ENCODE measurements at regions of chr14 and their contacts with region 1.

Region 1: DNA sequence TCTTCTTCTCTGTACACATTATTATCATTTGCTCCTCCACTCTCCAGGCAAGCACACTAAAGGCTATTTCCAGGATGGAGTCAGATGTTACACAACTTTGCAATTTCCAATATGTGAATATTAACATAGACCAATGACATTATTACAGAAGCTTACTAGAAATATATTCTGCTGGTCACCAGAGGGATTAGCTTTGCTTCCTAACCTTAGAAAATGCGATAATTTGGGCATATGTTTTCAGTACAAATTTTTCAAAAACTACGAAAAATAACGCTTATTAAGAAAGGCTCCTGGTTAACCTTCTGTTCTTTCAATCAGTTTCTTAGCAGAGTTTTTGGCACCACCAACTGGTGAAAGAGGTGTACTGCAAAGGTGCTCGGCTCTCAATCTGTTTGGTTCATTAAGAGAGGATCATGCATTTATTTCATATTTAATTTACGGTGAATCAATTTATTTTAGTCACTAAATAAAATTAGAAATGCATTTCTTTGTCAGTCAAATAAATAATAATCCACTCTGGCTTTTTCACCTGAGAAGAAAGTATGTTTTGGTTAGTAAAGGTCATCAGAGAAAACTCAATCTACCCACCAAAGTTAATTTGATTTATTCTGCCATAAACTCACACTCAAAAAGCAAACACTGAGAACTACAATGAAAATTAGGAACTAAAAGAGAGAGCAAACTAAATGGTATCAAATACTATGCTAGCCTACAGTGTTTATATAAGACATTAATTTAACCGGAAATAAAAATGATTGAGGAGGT is 39.2 kb downstream of the EFCAB11 start:
- DNase-seq: peak in 6 of 10 donors; percentile 35 to 80 (median 64)
- H3K4me3 ChIP-seq: peak overlapping the region in 8 of 59 donors; percentile 10 to 33 (median 17)
- H3K27ac ChIP-seq: peak overlapping the region in 13 of 59 donors; percentile 2 to 54 (median 24)
- H3K27me3 ChIP-seq: no peaks in the 10 kb centered on the region
- CTCF ChIP-seq: peak; percentile 94 to 99 (median 97)

Region 2: GRCh38 chr14:89027097-89027740 is 888.1 kb before region 1 on chr14:
- intact Hi-C with region 1: loop called in 1 of 2 experiments (anchors 5 kb)
- DNase-seq: peak in 5 of 10 donors; percentile 29 to 76 (median 52)
- H3K4me3 ChIP-seq: peak overlapping the region; percentile 40 to 85 (median 68)
- H3K27ac ChIP-seq: peak overlapping the region in 3 of 59 donors; percentile 5 to 46 (median 38)
- H3K27me3 ChIP-seq: peaks cover 0 to 2% (median 0%) of the 10 kb centered on the region in 45 donors
- CTCF ChIP-seq: peak; percentile 35 to 96 (median 74)

Region 3: GRCh38 chr14:89040460-89041259 is 874.6 kb before region 1 on chr14:
- intact Hi-C with region 1: loop called (anchors 2 to 5 kb)
- DNase-seq: peak; percentile 79 to 93 (median 88)
- H3K4me3 ChIP-seq: peak overlapping the region; percentile 33 to 80 (median 62)
- H3K27ac ChIP-seq: peak overlapping the region in 56 of 59 donors; percentile 1 to 91 (median 76)
- H3K27me3 ChIP-seq: no peaks in the 10 kb centered on the region
- CTCF ChIP-seq: peak; percentile 78 to 97 (median 93)

Region 4: DNA sequence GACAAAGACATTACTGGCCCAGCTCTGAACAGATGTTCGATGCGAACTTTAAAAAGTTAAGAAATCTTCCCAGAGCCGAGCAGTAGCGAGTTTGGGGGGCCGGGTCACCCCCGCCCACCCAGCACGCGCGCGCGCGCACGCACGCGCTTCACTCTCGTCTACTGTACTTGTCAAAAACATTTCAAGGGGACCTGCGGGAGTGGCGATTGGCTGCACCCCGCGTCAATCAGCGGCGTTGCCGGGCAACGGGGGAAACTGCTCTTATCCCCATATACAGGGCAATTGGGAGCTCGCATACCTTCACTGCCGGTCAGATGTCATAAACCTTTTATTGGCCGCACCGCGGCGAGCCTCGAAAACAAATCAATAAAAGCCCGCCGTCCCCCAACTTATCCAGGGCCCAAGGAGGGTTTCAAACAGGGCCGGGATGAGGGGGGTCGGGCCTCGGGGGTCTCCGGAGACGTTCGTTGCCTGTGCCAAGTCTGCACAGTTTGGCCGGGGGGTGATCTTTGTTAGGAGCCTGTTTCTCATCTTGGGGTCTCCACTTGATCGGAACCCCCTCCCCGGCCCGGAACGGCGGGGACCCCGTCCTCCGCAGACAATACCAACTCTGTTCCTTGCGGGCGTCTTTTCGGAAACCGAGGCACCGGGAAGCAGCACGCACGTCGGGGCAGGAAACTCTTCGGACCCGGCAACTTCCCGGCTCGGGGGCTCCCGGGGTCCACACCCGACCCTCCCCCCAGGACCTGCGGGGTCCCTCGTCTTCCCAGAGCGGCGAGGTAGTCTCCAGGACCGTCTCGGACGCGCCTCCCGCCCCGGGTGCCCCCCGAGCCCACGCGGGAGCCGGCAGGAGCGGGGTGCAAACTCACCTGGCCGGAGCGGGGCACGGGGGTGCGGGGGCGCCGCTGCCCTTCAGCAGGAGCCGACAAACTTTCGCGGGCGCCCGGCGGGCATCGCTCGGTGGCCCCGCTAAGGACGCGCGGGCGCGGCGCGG is 499.0 kb before region 1 on chr14:
- intact Hi-C with region 1: loop called (anchors 5 to 10 kb)
- DNase-seq: peak; percentile 97 to 99 (median 98)
- H3K4me3 ChIP-seq: peak overlapping the region; percentile 63 to 96 (median 90)
- H3K27ac ChIP-seq: peak overlapping the region in 58 of 59 donors; percentile 40 to 94 (median 85)
- H3K27me3 ChIP-seq: no peaks in the 10 kb centered on the region
- CTCF ChIP-seq: peak in 2 of 56 donors; percentile 20 to 26

Region 5: GRCh38 chr14:89618811-89619551 is 296.3 kb before region 1 on chr14:
- intact Hi-C with region 1: loop called in 1 of 2 experiments (anchors 5 kb)
- DNase-seq: peak in 9 of 10 donors; percentile 37 to 81 (median 54)
- H3K4me3 ChIP-seq: peak overlapping the region; percentile 55 to 87 (median 76)
- H3K27ac ChIP-seq: peak overlapping the region in 52 of 59 donors; percentile 16 to 88 (median 77)
- H3K27me3 ChIP-seq: no peaks in the 10 kb centered on the region
- CTCF ChIP-seq: peak in 4 of 56 donors; percentile 8 to 28 (median 12)

Region 6: DNA sequence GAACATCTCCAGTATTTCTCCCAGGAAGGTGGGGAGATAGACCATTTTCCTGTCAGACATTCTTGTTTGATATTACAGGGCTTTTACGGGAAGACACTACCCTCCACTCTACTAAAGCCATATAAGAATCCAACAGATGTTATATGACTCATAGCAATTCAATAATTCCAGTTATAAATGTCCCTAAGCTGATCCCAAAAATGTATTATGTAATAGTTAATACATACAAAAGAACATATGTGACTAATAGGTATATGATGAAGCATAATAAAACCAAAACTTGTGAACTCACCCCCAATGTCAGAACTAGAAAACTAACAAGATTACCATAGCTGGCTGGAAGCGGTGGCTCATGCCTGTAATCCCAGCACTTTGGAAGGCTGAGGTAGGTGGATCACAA is 45.0 kb before region 1 on chr14:
- intact Hi-C with region 1: no loop called
- DNase-seq: no peak
- H3K4me3 ChIP-seq: no peak overlapping the region
- H3K27ac ChIP-seq: no peak overlapping the region
- H3K27me3 ChIP-seq: no peaks in the 10 kb centered on the region
- CTCF ChIP-seq: no peak

Region 7: DNA sequence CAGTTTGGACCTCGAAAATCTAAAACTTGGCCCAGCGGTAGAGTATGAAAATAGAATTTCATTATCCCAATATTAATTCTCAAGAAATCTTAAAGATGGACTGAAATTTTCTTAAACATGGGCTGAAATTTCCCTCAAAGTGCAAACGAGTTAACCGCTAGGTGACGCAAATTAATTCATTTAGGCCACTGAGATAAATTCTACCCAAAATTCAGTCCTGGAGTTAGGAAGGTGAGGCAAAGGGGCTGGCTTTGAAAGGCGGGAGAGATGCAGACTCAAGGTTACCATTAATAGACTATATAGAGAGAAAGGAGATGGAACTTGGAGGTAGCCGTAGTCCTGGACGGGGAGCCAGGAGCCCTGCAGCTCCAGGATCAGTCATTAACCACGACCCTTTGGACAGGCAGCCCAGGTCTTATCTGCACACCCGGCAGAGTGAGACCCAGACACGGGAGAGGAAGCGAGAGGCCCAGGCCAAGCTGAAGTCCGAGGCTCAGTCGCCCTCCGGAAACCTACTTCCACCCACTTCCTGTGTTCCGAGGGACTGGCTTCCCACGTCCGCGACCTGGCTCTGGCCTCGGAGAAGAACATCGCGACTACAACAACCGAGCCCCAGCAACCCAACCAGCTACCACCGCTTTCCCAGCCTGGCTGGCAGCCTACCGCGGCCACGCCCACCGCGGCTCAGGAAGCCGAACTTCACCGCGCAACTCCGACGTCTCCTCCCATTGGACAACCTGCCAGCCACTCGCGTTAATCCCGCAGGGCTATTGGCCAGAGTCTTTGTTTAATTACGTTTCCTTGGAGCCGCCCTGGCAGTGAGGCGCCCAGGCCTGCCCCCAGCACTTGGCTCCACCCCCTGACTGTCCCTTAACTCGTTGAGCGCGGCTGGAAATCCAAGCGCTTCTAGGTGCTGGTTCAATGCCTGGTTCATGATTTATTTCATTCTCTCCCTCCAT is 39.1 kb after region 1 on chr14 and contains the start of gene EFCAB11:
- intact Hi-C with region 1: no loop called
- DNase-seq: peak; percentile 93 to 99 (median 98)
- H3K4me3 ChIP-seq: peak within 1 kb of the TSS; percentile 71 to 98 (median 90)
- H3K27ac ChIP-seq: peak within 1 kb of the TSS; percentile 1 to 91 (median 77)
- H3K27me3 ChIP-seq: no peaks in the 10 kb centered on the region
- CTCF ChIP-seq: peak in 15 of 56 donors; percentile 4 to 31 (median 20)
- total RNA-seq, gene EFCAB11: 6.1 to 28.8 (median 11.4) TPM